Natural killer cell (primary cell): ENCODE measurements at regions of chr4 and their contacts with region 1.

Region 1: GRCh38 chr4:83284193-83285054 is at the start of gene COQ2:
- DNase-seq: peak; percentile 96 to 97
- ATAC-seq: peak; percentile 87 to 93 (median 88)
- H3K4me3 ChIP-seq: peak within 1 kb of the TSS; percentile 81
- H3K4me3 Mint-ChIP-seq: peak within 1 kb of the TSS; percentile 96
- H3K27ac ChIP-seq: peak within 1 kb of the TSS; percentile 80
- H3K27ac Mint-ChIP-seq: peak within 1 kb of the TSS; percentile 97 to 98
- H3K4me1 ChIP-seq: peaks cover 12% of the 10 kb centered on the region
- H3K4me1 Mint-ChIP-seq: peaks cover 33 to 37% of the 10 kb centered on the region in 2 donors
- H3K27me3 ChIP-seq: no peaks in the 10 kb centered on the region
- H3K27me3 Mint-ChIP-seq: no peaks in the 10 kb centered on the region
- CTCF ChIP-seq: no peak
- total RNA-seq, gene COQ2: 4.7 to 9.7 (median 7.0) TPM

Region 2: GRCh38 chr4:82462415-82462831 is 822.0 kb before region 1 on chr4:
- intact Hi-C with region 1: loop called (anchors 10 kb)
- DNase-seq: peak; percentile 75 to 91
- ATAC-seq: peak; percentile 90 to 100 (median 99)
- H3K4me3 ChIP-seq: no peak overlapping the region
- H3K4me3 Mint-ChIP-seq: no peak overlapping the region
- H3K27ac ChIP-seq: no peak overlapping the region
- H3K27ac Mint-ChIP-seq: no peak overlapping the region
- H3K4me1 ChIP-seq: no peaks in the 10 kb centered on the region
- H3K4me1 Mint-ChIP-seq: no peaks in the 10 kb centered on the region
- H3K27me3 ChIP-seq: no peaks in the 10 kb centered on the region
- H3K27me3 Mint-ChIP-seq: no peaks in the 10 kb centered on the region
- CTCF ChIP-seq: peak; percentile 74

Region 3: DNA sequence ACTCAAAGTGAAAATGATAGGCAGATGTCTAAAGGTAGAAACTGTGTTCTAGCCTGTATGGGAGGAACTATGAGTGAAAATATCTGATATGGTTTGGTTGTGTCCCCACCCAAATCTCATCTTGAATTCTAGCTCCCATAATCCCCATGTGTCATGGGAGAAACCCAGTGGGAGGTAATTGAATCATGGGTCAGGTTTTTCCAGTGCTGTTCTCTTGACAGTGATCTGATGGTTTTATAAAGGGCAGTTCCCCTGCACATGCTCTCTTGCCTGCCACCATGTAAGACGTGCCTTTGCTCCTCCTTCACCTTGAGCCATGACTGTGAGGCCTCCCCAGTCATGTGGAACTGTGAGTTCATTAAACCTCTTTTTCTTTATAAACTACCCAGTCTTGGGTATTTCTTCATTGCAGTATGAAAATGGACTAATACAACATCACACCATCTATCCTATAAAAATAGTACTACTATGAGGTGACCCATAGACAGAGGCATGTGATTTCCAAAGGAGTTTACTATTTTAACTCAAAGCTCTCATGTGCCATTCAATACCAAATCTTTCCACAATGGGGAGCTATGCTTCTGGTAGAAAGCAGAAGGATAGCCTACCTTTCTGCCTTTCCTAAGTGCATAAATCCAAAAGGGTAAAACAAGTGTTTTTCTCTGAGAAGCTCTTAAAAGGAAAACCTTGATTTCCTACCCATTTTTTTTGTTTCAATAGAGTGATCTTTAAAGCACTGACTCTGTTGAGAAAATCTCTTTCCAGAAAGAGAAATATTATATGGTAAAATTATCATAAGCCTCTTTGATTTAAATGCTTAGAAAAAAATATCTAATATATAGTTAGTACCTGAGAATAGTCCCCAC is 432.3 kb before region 1 on chr4:
- intact Hi-C with region 1: loop called (anchors 10 kb)
- DNase-seq: peak in 1 of 2 donors; percentile 61
- ATAC-seq: peak in 2 of 3 donors; percentile 49 to 67
- H3K4me3 ChIP-seq: no peak overlapping the region
- H3K4me3 Mint-ChIP-seq: no peak overlapping the region
- H3K27ac ChIP-seq: no peak overlapping the region
- H3K27ac Mint-ChIP-seq: peak overlapping the region in 1 of 2 donors; percentile 31
- H3K4me1 ChIP-seq: no peaks in the 10 kb centered on the region
- H3K4me1 Mint-ChIP-seq: no peaks in the 10 kb centered on the region
- H3K27me3 ChIP-seq: no peaks in the 10 kb centered on the region
- H3K27me3 Mint-ChIP-seq: no peaks in the 10 kb centered on the region
- CTCF ChIP-seq: peak; percentile 58

Region 4: DNA sequence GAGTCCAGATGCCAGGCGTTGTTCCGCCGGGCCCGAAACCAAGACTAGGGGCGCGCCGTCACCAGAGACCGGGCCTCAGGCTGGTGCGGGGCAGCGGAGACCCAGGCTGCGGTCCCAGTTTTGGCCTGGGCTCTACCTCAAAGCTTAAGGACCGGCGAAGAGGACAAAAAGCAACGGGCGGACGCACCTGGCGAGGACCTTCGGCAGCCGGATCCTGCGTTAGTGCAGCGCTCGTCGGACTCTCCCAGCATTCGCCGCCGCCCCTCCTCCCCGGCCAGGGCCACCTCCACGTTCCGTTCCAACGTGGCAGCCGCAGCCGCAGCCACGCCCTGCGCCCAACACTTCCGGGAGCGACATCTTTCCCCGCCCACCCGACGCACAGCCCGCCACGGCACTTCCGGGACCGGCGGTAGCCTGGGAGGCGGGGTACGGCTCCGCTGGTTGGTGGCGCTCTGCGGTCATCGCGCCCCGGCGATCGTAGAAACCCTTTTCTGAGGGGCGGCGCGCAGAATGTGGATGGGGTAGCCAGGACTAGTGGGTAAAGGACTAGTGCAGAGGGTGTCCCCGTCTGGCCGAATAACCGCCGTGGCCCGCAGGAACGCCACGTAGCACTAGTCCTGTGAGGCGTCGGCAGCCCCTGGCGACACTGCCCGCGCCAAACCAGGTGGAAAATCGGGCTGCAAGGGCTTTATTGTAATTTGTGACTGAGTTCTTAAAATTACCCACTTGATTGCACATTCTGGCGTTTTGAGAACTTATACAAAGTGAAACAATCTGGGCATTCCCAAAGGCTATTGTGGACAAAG is 393.3 kb before region 1 on chr4 and contains the start of gene SEC31A:
- intact Hi-C with region 1: loop called (anchors 5 kb)
- DNase-seq: peak; percentile 96 to 98
- ATAC-seq: peak; percentile 92 to 98 (median 93)
- H3K4me3 ChIP-seq: peak within 1 kb of the TSS; percentile 96
- H3K4me3 Mint-ChIP-seq: peak within 1 kb of the TSS; percentile 96
- H3K27ac ChIP-seq: peak within 1 kb of the TSS; percentile 89
- H3K27ac Mint-ChIP-seq: peak within 1 kb of the TSS; percentile 97 to 99
- H3K4me1 ChIP-seq: peaks cover 7% of the 10 kb centered on the region
- H3K4me1 Mint-ChIP-seq: peaks cover 19 to 33% of the 10 kb centered on the region in 2 donors
- H3K27me3 ChIP-seq: no peaks in the 10 kb centered on the region
- H3K27me3 Mint-ChIP-seq: no peaks in the 10 kb centered on the region
- CTCF ChIP-seq: no peak
- total RNA-seq, gene SEC31A: 176 to 183 (median 177) TPM

Region 5: DNA sequence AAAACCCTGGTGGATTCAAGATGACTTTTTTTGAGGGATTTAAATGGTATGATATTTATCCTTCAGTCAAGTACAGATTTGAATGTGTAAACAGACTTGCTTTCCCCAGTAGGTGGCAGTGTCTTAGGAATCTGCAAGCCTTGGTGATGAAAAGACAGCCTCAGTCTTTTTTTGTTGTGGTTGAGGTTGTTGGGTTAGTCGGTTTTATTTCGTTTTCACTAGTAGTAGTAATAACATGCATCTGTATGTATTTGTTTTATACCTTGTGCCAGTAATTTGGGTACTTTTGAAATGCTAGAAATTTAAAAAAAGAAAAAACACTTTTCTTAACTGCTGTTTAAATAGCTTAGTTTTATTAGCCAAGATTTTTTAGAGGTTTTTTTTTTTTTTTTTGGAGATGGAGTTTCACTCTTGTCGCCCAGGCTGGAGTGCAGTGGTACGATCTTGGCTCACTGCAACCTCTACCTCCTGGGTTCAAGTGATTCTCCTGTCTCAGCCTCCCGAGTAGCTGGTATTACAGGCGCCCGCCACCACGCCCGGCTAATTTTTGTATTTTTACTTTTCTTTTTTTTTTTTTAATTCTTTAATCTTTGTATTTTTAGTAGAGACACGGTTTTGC is 210.2 kb before region 1 on chr4:
- intact Hi-C with region 1: loop called (anchors 1 kb)
- DNase-seq: peak in 1 of 2 donors; percentile 93
- ATAC-seq: peak; percentile 92 to 97 (median 94)
- H3K4me3 ChIP-seq: no peak overlapping the region
- H3K4me3 Mint-ChIP-seq: peak overlapping the region; percentile 86
- H3K27ac ChIP-seq: no peak overlapping the region
- H3K27ac Mint-ChIP-seq: peak overlapping the region; percentile 67 to 85
- H3K4me1 ChIP-seq: peaks cover 17% of the 10 kb centered on the region
- H3K4me1 Mint-ChIP-seq: peaks cover 30 to 37% of the 10 kb centered on the region in 2 donors
- H3K27me3 ChIP-seq: no peaks in the 10 kb centered on the region
- H3K27me3 Mint-ChIP-seq: no peaks in the 10 kb centered on the region
- CTCF ChIP-seq: peak; percentile 75

Region 6: DNA sequence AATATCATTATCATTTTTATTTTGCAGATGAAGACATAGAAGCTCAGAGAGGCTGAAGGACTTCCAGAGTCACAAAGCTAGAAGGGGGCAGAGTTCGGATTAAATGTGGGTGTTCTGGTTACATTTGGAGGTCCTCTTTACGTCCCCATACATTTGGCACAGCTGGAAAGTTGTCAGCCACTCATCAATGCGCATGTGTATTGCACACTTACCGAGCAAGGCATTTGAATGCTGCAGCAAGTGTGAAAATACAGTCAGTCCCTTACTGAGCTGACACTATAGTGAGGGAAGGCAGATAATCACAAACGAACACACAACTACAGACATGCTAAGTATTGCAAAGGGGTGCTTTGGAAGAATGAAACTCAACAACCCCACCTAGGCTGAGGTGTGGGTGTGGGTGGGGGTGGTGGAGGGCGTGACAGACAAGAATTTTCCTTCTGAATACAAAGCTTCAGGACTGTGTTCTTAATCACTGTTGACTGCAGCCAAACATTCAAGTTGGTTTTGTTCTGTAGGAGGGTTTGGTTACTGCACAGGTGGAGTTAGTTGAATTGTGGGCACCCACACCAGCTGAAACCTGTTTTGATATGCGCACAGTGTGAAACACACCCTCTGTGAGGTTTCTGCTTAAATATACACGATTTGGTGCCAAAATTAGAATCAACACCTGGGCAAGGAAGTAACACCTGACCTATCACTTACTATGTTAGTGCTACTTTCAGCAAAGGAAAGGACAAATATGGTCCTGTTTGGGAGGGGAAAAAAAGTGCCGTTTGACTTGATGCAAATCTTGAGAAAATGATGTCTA is 72.2 kb before region 1 on chr4:
- intact Hi-C with region 1: loop called (anchors 1 kb)
- DNase-seq: peak; percentile 65 to 89
- ATAC-seq: peak; percentile 85 to 95 (median 91)
- H3K4me3 ChIP-seq: no peak overlapping the region
- H3K4me3 Mint-ChIP-seq: peak overlapping the region; percentile 83
- H3K27ac ChIP-seq: peak overlapping the region; percentile 75
- H3K27ac Mint-ChIP-seq: peak overlapping the region; percentile 92 to 93
- H3K4me1 ChIP-seq: peaks cover 64% of the 10 kb centered on the region
- H3K4me1 Mint-ChIP-seq: peaks cover 94% of the 10 kb centered on the region in 2 donors
- H3K27me3 ChIP-seq: no peaks in the 10 kb centered on the region
- H3K27me3 Mint-ChIP-seq: no peaks in the 10 kb centered on the region
- CTCF ChIP-seq: no peak

Region 7: DNA sequence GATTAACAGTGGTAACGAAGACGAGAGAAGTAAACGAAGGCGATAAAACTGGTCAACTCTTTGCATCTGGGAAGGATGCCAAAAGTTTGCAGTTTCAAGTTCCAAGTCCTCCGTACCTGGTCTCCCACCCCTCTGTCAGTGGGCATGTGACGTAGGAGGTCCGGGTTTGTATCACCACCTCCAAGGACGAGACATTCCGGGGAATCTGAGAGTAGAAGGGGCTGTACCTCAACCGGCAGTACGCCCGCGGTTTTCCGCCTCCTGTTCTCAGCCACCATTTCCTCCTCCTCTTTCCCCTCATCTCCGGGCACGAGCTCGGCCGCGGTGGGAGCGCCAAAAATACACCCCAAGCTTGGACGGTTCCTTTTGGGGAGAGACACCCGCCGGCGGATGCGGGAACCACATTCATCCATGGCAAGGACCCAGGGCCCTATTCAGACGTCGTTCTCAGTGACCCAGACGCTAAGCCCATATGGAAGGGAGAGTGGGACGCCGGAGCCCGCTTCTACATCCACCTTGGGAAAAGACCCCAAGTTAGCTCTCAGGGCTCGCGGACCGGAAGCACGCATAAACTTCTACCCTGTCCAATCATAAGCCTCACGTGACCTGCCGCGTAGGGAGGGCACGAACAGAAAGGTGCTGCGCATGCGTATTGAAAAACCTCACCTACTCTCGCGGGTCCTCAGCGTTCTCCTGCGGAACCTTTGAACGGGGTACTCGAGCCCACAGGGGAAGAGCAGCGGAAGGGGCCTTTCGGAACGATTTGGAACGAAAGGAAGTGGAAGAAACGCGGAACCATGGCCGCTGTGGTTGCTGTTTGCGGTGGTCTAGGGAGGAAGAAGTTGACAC is 171.1 kb after region 1 on chr4 and contains the starts of genes HELQ and MRPS18C:
- intact Hi-C with region 1: loop called (anchors 2 kb)
- DNase-seq: peak; percentile 89 to 99
- ATAC-seq: peak; percentile 89 to 96 (median 93)
- H3K4me3 ChIP-seq: peak within 1 kb of the TSS; percentile 78
- H3K4me3 Mint-ChIP-seq: peak within 1 kb of the TSS; percentile 100
- H3K27ac ChIP-seq: peak within 1 kb of the TSS; percentile 94
- H3K27ac Mint-ChIP-seq: peak within 1 kb of the TSS; percentile 97 to 100
- H3K4me1 ChIP-seq: peaks cover 9% of the 10 kb centered on the region
- H3K4me1 Mint-ChIP-seq: peaks cover 35 to 39% of the 10 kb centered on the region in 2 donors
- H3K27me3 ChIP-seq: no peaks in the 10 kb centered on the region
- H3K27me3 Mint-ChIP-seq: no peaks in the 10 kb centered on the region
- CTCF ChIP-seq: no peak
- total RNA-seq, gene HELQ: 19.8 to 33.6 (median 29.9) TPM
- total RNA-seq, gene MRPS18C: 14.4 to 26.0 (median 18.1) TPM

Region 8: GRCh38 chr4:83629945-83630721 is 345.7 kb after region 1 on chr4:
- intact Hi-C with region 1: no loop called
- DNase-seq: no peak
- ATAC-seq: peak; percentile 38 to 86 (median 70)
- H3K4me3 ChIP-seq: no peak overlapping the region
- H3K4me3 Mint-ChIP-seq: no peak overlapping the region
- H3K27ac ChIP-seq: no peak overlapping the region
- H3K27ac Mint-ChIP-seq: no peak overlapping the region
- H3K4me1 ChIP-seq: no peaks in the 10 kb centered on the region
- H3K4me1 Mint-ChIP-seq: no peaks in the 10 kb centered on the region
- H3K27me3 ChIP-seq: no peaks in the 10 kb centered on the region
- H3K27me3 Mint-ChIP-seq: peaks cover 0 to 6% of the 10 kb centered on the region in 2 donors
- CTCF ChIP-seq: no peak